ENCODE measurements at regions of chr14 and their contacts with region 1.

Region 1: GRCh38 chr14:75709207-75709812 is 48.3 kb downstream of the TTLL5 start:
- DNase-seq: peak; percentile 76
- H3K4me3 ChIP-seq: no peak overlapping the region
- H3K27ac ChIP-seq: no peak overlapping the region
- H3K4me1 ChIP-seq: no peaks in the 10 kb centered on the region
- H3K27me3 ChIP-seq: no peaks in the 10 kb centered on the region
- CTCF ChIP-seq: peak; percentile 64

Region 2: GRCh38 chr14:75906676-75907280 is 197.5 kb after region 1 on chr14:
- intact Hi-C with region 1: loop called (anchors 10 kb)
- DNase-seq: peak; percentile 78
- H3K4me3 ChIP-seq: no peak overlapping the region
- H3K27ac ChIP-seq: no peak overlapping the region
- H3K4me1 ChIP-seq: no peaks in the 10 kb centered on the region
- H3K27me3 ChIP-seq: no peaks in the 10 kb centered on the region
- CTCF ChIP-seq: peak; percentile 93

Region 3: DNA sequence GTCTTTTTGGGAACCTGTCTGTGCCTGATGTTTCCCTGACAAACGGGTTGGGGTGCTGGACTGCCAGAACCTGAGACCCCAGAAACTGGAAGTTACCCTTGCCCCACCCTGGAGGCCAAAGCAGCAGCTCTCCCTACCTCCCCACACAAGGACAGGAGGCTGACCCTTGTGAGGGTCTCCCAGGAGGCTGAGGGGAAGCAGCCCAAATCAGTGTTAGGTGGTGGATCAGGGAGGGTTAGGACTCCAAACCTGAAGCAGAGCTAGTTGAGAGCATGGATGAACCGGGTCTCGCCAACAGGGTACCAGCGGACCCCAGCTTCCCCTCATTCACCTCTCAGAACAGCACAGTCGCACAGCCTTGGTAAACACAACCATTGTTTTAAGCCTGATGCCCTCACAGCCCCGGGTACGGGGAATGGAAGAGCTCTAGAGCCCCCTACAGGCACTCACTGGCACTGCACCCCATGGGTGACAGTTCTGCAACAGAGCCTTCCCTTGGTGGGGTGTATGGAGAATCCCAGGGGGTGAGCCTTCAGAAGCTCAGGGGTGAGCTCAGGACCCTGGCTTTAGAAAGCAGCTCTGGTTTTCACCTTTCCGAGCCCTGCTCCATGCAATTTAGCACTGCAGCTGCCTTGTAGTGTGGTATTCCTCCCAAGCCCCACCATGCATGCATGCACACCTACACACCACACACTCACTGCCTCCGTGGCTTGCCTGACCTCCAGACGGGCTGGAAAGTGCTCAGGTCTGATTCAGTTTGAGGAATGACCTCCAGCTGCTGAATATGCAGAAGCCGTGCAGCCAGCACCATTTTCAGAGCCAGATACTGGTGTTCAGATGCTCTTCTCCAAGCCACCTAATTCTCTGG is 677.8 kb after region 1 on chr14:
- intact Hi-C with region 1: loop called (anchors 5 kb)
- DNase-seq: peak; percentile 61
- H3K4me3 ChIP-seq: no peak overlapping the region
- H3K27ac ChIP-seq: no peak overlapping the region
- H3K4me1 ChIP-seq: no peaks in the 10 kb centered on the region
- H3K27me3 ChIP-seq: peaks cover 2% of the 10 kb centered on the region
- CTCF ChIP-seq: peak; percentile 96

Region 4: DNA sequence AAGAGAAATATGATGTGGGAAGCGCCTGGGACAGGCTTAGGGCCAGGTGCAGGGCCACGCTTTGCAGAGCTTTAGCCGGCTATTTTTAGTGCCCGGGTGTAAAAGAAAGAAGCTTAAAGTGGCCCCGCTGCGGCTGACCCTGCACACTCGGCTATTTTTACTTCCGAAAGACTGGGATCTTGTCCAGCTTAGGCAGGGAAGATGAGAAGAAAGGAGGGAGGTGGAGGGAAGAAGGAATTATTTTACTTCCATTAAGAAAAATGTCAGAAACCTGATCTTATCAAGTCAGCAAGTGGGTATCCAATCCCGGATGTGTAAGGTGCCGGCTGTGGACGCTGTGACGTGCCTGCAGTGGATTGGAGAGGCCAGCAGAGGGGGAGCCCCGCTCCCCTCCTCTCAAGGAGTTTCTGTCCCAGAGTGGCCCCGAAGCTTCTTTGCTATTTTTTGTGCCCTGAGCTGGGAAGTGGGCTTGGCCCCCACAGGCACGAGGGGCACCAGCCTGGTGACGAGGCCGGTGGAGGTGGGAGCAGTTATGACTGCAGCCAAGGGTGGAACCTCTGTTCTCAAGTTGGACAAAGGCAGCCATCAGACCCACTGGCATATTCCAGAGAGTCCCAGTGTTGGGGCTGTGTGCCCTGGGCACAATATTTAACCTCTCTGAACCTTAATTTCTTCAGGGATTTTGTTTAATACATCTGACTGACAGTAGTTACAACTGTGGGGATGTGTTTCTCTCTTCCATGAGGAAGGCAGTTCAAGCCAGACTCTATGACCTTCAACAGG is 764.4 kb after region 1 on chr14:
- intact Hi-C with region 1: no loop called
- DNase-seq: no peak
- H3K4me3 ChIP-seq: no peak overlapping the region
- H3K27ac ChIP-seq: no peak overlapping the region
- H3K4me1 ChIP-seq: no peaks in the 10 kb centered on the region
- H3K27me3 ChIP-seq: no peaks in the 10 kb centered on the region
- CTCF ChIP-seq: no peak

Measured in colonic mucosa (tissue), 4 donors.